ENCODE measurements at regions of chrX and their contacts with region 1.

Region 1: GRCh38 chrX:151082076-151082948 is 94.1 kb upstream of the GPR50 start:
- DNase-seq: peak; percentile 6 to 40
- ATAC-seq: peak; percentile 86 to 95
- H3K4me3 ChIP-seq: peak overlapping the region; percentile 13 to 36 (median 23)
- H3K27ac ChIP-seq: no peak overlapping the region
- H3K4me1 ChIP-seq: peaks cover 0 to 9% of the 10 kb centered on the region in 2 donors
- H3K27me3 ChIP-seq: no peaks in the 10 kb centered on the region
- CTCF ChIP-seq: peak; percentile 61 to 93 (median 87)
- POLR2A ChIP-seq: no peak

Region 2: DNA sequence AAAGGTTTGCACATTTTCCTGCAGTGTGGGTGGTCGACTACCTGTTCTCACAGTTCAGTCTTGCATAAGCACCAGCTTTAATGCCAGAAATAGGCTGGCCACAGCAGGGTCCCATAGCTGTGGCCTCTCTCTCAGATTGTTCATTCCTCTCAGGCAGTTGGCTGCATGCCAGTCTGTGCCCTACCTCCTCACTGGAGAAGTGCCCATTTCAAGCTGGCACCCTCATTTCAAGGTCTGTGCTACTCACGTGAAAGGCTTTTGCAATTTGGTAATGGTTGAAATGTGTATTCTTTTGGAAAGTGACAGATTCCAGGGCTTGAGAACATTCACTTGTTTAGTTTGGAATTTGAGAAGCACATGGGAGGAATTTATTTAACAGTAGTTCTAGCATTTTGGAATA is 418.0 kb before region 1 on chrX:
- in situ Hi-C with region 1: no loop called
- intact Hi-C with region 1: no loop called
- DNase-seq: peak in 1 of 2 donors; percentile 11
- ATAC-seq: no peak
- H3K4me3 ChIP-seq: no peak overlapping the region
- H3K27ac ChIP-seq: no peak overlapping the region
- H3K4me1 ChIP-seq: no peaks in the 10 kb centered on the region
- H3K27me3 ChIP-seq: no peaks in the 10 kb centered on the region
- CTCF ChIP-seq: no peak
- POLR2A ChIP-seq: no peak

Region 3: DNA sequence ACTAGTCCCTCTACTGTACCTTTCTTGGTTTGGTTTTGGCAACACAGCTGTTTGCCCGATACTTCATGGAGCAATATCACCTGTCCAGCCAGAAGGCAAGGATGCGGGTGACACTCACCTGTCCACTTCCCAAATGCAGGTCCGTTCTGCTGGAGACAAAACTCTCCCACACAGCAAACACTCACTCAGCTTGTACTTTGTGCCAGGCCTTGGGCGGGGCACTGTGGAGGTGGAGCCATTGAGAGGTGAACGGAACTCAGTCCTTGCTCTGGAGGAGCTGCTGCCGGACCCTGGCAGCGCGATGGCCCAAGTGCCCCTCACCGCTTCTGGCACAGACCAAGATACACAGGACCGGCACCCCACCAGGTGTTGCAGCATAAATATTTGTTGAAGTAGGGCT is 114.5 kb before region 1 on chrX:
- in situ Hi-C with region 1: no loop called
- intact Hi-C with region 1: no loop called
- DNase-seq: no peak
- ATAC-seq: no peak
- H3K4me3 ChIP-seq: no peak overlapping the region
- H3K27ac ChIP-seq: no peak overlapping the region
- H3K4me1 ChIP-seq: no peaks in the 10 kb centered on the region
- H3K27me3 ChIP-seq: no peaks in the 10 kb centered on the region
- CTCF ChIP-seq: no peak
- POLR2A ChIP-seq: no peak

Region 4: GRCh38 chrX:150989420-150989819 is 92.9 kb before region 1 on chrX:
- in situ Hi-C with region 1: no loop called
- intact Hi-C with region 1: loop called (anchors 5 kb)
- DNase-seq: no peak
- ATAC-seq: no peak
- H3K4me3 ChIP-seq: no peak overlapping the region
- H3K27ac ChIP-seq: no peak overlapping the region
- H3K4me1 ChIP-seq: no peaks in the 10 kb centered on the region
- H3K27me3 ChIP-seq: no peaks in the 10 kb centered on the region
- CTCF ChIP-seq: no peak
- POLR2A ChIP-seq: no peak